ENCODE measurements at regions of chr6 and their contacts with region 1.

Region 1: GRCh38 chr6:31834434-31835198 is 7.1 kb downstream of the HSPA1B start:
- DNase-seq: peak; percentile 89 to 93 (median 92)
- ATAC-seq: peak; percentile 43 to 88 (median 66)
- H3K4me3 ChIP-seq: peak overlapping the region; percentile 81 to 89 (median 87)
- H3K27ac ChIP-seq: peak overlapping the region; percentile 93 to 96 (median 94)
- H3K4me1 ChIP-seq: peaks cover 0 to 41% (median 13%) of the 10 kb centered on the region in 4 donors
- H3K27me3 ChIP-seq: no peaks in the 10 kb centered on the region
- CTCF ChIP-seq: no peak
- POLR2A ChIP-seq: peak; percentile 71

Region 2: GRCh38 chr6:31474871-31475286 is 359.7 kb before region 1 on chr6:
- intact Hi-C with region 1: no loop called
- DNase-seq: no peak
- ATAC-seq: peak in 1 of 4 donors; percentile 19
- H3K4me3 ChIP-seq: no peak overlapping the region
- H3K27ac ChIP-seq: no peak overlapping the region
- H3K4me1 ChIP-seq: no peaks in the 10 kb centered on the region
- H3K27me3 ChIP-seq: no peaks in the 10 kb centered on the region
- CTCF ChIP-seq: no peak
- POLR2A ChIP-seq: no peak

Region 3: DNA sequence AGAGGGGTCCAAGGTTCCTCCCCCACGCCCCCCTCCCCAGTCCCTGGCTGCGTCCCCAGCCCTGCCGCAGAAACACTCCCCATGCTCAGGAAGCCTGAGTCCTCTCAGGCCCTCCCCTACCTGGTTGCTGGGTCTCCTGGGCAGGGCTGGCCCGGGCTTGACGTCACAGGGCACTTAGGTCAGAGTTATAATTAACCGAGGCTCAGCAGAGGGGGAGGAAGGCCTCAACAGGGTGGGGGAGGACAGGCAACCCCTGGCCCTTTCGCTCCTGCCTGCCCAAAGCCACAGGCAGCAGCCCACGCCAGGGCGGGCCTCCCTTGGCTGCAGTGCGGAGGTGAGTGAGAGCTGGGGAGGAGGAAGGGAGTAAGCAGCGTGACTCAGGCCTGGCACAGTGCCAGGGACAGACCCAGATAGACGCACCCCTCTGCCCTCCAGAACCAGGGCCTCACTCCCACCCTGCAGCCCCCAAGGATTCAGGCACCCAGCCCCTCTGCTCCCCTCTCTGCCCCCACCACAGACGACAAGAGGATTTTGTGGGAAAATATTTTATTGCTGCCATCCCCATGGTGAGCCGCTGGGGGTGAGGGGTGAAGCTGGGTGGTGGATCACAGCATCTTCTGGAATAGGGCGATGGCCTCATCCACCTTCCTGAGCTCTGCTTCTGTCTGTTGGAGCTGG is 57.5 kb before region 1 on chr6 and contains the start of gene VWA7:
- intact Hi-C with region 1: loop called (anchors 10 kb)
- DNase-seq: peak; percentile 90 to 95 (median 93)
- ATAC-seq: peak; percentile 69 to 85 (median 79)
- H3K4me3 ChIP-seq: peak within 1 kb of the TSS; percentile 1 to 23 (median 18)
- H3K27ac ChIP-seq: peak within 1 kb of the TSS; percentile 52 to 61 (median 58)
- H3K4me1 ChIP-seq: peaks cover 0 to 30% (median 6%) of the 10 kb centered on the region in 4 donors
- H3K27me3 ChIP-seq: no peaks in the 10 kb centered on the region
- CTCF ChIP-seq: no peak
- POLR2A ChIP-seq: peak; percentile 29
- total RNA-seq, gene VWA7: 1.2 to 5.2 (median 2.7) TPM

Region 4: GRCh38 chr6:32883789-32884188 is 1049.2 kb after region 1 on chr6:
- intact Hi-C with region 1: no loop called
- DNase-seq: no peak
- ATAC-seq: peak; percentile 35 to 57 (median 54)
- H3K4me3 ChIP-seq: no peak overlapping the region
- H3K27ac ChIP-seq: no peak overlapping the region
- H3K4me1 ChIP-seq: no peaks in the 10 kb centered on the region
- H3K27me3 ChIP-seq: peaks cover 0 to 5% of the 10 kb centered on the region in 2 donors
- CTCF ChIP-seq: no peak
- POLR2A ChIP-seq: no peak

Measured in right lobe of liver (tissue), 6 donors.